B cell (primary cell): ENCODE measurements at regions of chr1 and their contacts with region 1.

Region 1: DNA sequence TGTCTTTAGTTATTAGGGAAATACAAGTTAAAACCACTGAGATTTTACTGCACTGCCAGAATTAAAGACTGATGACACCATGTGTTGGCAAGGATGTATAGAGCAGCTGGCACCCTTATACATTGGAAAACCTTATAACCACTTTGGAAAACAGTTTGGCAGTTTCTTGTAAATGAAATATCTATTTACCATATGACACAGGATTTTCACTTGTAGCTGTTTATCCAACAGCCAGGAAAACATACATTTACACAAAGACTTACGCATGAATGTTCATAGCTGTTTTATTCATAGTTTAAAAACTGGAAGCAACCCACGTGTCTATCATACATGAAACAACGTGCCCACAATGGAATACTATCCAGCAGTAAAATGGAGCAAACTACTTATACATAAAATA is 45.3 kb downstream of the PRRC2C start:
- DNase-seq: no peak
- ATAC-seq: no peak
- H3K4me3 ChIP-seq: no peak overlapping the region
- H3K4me3 Mint-ChIP-seq: no peak overlapping the region
- H3K27ac ChIP-seq: no peak overlapping the region
- H3K27ac Mint-ChIP-seq: no peak overlapping the region
- H3K4me1 ChIP-seq: no peaks in the 10 kb centered on the region
- H3K4me1 Mint-ChIP-seq: no peaks in the 10 kb centered on the region
- H3K27me3 ChIP-seq: no peaks in the 10 kb centered on the region
- H3K27me3 Mint-ChIP-seq: no peaks in the 10 kb centered on the region
- CTCF ChIP-seq: no peak

Region 2: GRCh38 chr1:171515299-171515698 is 15.4 kb before region 1 on chr1:
- CTCF ChIA-PET with region 1: interaction called, 3 read pairs
- POLR2A ChIA-PET with region 1: no interaction called
- intact Hi-C with region 1: loop called (anchors 2 kb)
- DNase-seq: no peak
- ATAC-seq: no peak
- H3K4me3 ChIP-seq: no peak overlapping the region
- H3K4me3 Mint-ChIP-seq: no peak overlapping the region
- H3K27ac ChIP-seq: peak overlapping the region in 1 of 2 donors; percentile 19
- H3K27ac Mint-ChIP-seq: no peak overlapping the region
- H3K4me1 ChIP-seq: peaks cover 0 to 4% of the 10 kb centered on the region in 2 donors
- H3K4me1 Mint-ChIP-seq: peaks cover 18% of the 10 kb centered on the region
- H3K27me3 ChIP-seq: no peaks in the 10 kb centered on the region
- H3K27me3 Mint-ChIP-seq: no peaks in the 10 kb centered on the region
- CTCF ChIP-seq: no peak

Region 3: GRCh38 chr1:171570295-171570694 is 39.6 kb after region 1 on chr1:
- CTCF ChIA-PET with region 1: interaction called, 3 read pairs
- POLR2A ChIA-PET with region 1: no interaction called
- intact Hi-C with region 1: loop called (anchors 5 kb)
- DNase-seq: no peak
- ATAC-seq: no peak
- H3K4me3 ChIP-seq: no peak overlapping the region
- H3K4me3 Mint-ChIP-seq: no peak overlapping the region
- H3K27ac ChIP-seq: no peak overlapping the region
- H3K27ac Mint-ChIP-seq: no peak overlapping the region
- H3K4me1 ChIP-seq: no peaks in the 10 kb centered on the region
- H3K4me1 Mint-ChIP-seq: no peaks in the 10 kb centered on the region
- H3K27me3 ChIP-seq: no peaks in the 10 kb centered on the region
- H3K27me3 Mint-ChIP-seq: no peaks in the 10 kb centered on the region
- CTCF ChIP-seq: no peak

Region 4: GRCh38 chr1:171741872-171742576 is 211.3 kb after region 1 on chr1 and contains the start of gene VAMP4:
- CTCF ChIA-PET with region 1: no interaction called
- POLR2A ChIA-PET with region 1: no interaction called
- intact Hi-C with region 1: no loop called
- DNase-seq: peak; percentile 92
- ATAC-seq: peak; percentile 90
- H3K4me3 ChIP-seq: peak within 1 kb of the TSS; percentile 69 to 95 (median 93)
- H3K4me3 Mint-ChIP-seq: peak within 1 kb of the TSS; percentile 100
- H3K27ac ChIP-seq: peak within 1 kb of the TSS; percentile 91
- H3K27ac Mint-ChIP-seq: peak within 1 kb of the TSS; percentile 100
- H3K4me1 ChIP-seq: peaks cover 20 to 23% of the 10 kb centered on the region in 2 donors
- H3K4me1 Mint-ChIP-seq: peaks cover 40% of the 10 kb centered on the region
- H3K27me3 ChIP-seq: no peaks in the 10 kb centered on the region
- H3K27me3 Mint-ChIP-seq: no peaks in the 10 kb centered on the region
- CTCF ChIP-seq: no peak
- total RNA-seq, gene VAMP4: 17.5 and 21.8 TPM in 2 replicates